ENCODE measurements at regions of chr17 and their contacts with region 1.

Region 1: DNA sequence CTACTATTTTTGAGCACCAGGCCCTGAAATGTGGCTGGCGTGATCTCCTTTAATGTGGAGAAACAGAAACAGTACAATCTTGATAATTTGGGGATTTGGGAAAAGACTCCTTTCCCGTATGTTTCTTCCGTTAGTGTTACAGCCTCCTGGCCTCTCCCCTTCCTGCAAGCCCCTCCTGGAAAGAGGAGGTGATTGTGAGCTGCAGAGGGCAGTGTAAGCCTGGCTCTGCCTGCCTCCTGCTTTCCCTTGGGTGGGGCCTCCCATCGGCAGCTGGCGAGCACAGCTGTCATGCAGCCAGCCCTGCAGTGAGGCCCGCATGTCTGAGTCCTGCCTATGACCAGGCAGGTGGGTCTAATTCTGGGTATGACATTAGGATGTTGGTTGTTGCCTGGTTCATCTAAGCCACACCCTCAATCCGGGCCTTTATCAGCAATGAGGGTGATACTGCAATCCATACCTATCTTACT is 48.7 kb upstream of the WSB1 start:
- DNase-seq: peak; percentile 95
- H3K4me3 ChIP-seq: peak overlapping the region; percentile 70
- H3K27ac ChIP-seq: peak overlapping the region; percentile 94
- H3K4me1 ChIP-seq: peaks cover 20% of the 10 kb centered on the region
- H3K27me3 ChIP-seq: no peaks in the 10 kb centered on the region; the same call in 1 of the 2 replicates

Region 2: DNA sequence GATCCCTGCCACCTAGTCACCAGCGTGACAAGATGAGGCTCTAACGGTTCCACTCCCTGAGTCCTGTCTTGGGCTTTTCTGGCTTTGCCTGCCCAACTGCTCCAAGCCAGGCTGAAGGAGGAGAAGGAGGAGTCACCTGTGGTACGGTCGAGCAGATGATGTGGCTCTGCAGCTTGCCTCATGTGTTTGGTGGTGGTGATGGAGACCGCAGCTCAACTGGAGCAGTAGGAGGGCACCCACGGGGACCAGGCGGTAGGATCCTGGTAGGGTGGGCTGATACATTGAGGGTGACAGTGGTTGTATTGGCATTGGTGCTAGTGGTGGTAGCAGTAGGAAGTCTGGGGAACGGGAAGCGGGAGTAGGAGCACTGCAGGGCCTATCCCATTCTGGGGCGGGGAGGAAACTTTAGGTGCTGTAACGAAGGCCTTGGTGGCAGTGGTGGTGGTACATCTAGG is 154.2 kb before region 1 on chr17:
- in situ Hi-C with region 1: no loop called
- DNase-seq: no peak
- H3K4me3 ChIP-seq: no peak overlapping the region
- H3K27ac ChIP-seq: no peak overlapping the region
- H3K4me1 ChIP-seq: no peaks in the 10 kb centered on the region
- H3K27me3 ChIP-seq: no peaks in the 10 kb centered on the region

Region 3: DNA sequence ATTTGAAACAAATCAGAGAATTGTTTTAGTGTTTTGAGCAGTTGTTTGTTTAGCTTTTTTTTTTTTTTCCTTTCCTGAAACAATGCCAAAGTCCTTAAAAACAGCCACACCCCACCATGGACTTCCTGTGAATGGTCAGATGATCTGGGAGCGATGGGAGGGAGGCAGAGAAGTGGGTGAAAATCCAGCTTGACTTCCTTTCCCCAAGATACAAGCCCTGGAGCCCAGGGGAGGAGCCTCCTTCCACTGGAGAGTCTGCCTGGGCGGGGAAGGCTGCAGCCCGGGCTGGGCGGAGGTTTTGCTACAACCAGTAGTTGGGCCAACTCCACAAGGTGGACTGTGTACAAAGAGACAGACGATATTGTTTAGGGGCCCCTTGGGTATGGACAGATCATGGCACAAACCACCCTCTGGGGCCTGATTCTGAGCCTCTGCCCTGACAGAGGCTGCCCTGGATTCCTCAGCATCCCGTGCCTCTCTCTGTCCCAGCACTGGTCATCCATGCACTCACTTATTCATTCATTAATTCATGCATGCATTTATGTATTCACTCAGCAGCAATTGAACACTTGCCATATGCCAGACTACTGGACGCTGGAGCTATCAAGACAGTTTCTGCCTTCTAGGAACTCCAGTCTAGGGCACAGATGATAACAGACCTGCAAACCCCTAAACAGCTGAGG is 78.4 kb after region 1 on chr17:
- in situ Hi-C with region 1: loop called (anchors 10 kb)
- DNase-seq: peak; percentile 72
- H3K4me3 ChIP-seq: no peak overlapping the region
- H3K27ac ChIP-seq: 0 out of 2 replicates have a peak overlapping the region, but pooled peaks have one; percentile 7
- H3K4me1 ChIP-seq: peaks cover 19% of the 10 kb centered on the region; the same call in 1 of the 2 replicates
- H3K27me3 ChIP-seq: no peaks in the 10 kb centered on the region

Region 4: DNA sequence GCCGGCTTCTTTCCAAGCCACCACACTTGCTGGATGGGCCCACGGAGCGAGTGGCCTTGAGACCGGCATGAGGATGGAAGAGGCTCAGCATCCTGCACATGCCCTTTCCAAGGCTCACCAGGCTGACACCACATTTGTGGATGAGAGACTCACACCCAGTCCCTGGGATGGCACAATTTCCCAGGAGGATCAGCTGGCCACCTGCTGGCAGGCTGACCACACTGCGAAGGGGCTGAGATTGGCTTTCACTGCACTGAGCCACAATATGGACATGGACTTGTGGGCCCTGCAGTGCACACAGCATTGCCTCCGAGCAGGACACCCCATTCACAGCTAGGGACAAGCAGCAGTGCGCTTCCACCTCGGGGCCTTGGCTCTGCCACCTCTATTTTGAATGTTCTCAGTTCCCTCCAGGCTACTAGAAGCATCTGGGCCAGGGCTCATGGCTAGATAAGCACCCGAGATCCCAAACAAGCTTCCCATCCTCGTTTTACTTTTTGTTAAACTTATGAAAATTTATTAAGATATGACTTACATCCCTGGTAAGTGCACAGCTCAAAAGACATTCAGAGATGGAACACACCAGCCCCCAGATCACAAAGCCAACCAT is 185.7 kb after region 1 on chr17:
- in situ Hi-C with region 1: loop called (anchors 25 kb)
- DNase-seq: peak; percentile 59
- H3K4me3 ChIP-seq: no peak overlapping the region
- H3K27ac ChIP-seq: no peak overlapping the region
- H3K4me1 ChIP-seq: no peaks in the 10 kb centered on the region
- H3K27me3 ChIP-seq: no peaks in the 10 kb centered on the region